Activated CD8-positive, alpha-beta T cell treated with anti-CD3 and anti-CD28 coated beads for 36 hours (primary cell): ENCODE measurements at regions of chr2 and their contacts with region 1.

Region 1: DNA sequence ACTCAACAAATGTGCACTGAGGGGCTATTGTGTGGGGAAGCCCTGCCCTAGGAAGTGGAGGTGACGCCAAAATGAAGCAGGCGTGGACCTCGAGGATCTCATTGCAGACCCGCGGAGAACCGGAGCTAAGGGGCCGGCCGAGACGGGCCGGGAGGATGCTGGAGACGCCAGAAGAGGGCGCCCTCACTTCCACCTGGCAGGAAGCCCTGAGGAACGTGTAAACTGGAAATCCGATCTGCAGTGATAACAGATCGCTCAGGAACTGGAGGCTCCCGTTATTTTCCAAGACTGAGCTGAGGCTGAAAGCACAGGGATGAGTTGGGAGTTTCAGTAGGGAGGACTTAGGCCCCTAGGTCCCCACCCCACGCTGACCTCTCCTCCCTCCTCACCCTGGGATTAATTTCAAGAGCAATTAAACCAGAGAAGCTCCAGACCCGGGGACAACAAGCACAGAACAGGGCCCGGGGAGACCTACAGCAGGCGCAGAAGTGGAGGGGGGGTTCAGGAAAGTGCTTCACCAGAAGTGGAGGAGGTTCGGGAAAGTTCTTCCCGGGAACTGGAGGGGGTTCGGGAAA is 7.7 kb upstream of the COL6A3 start:
- DNase-seq: peak; percentile 88
- ATAC-seq: peak; percentile 92
- H3K4me3 Mint-ChIP-seq: peak overlapping the region; percentile 43
- H3K27ac Mint-ChIP-seq: peak overlapping the region; percentile 71
- H3K4me1 Mint-ChIP-seq: peaks cover 23% of the 10 kb centered on the region
- H3K27me3 Mint-ChIP-seq: peaks cover 1% of the 10 kb centered on the region
- CTCF ChIP-seq: peak; percentile 78

Region 2: GRCh38 chr2:237085248-237086221 is 336.1 kb before region 1 on chr2 and contains the start of gene COPS8:
- CTCF ChIA-PET with region 1: interaction called, 12 read pairs
- POLR2A ChIA-PET with region 1: no interaction called
- intact Hi-C with region 1: no loop called
- DNase-seq: peak; percentile 94
- ATAC-seq: peak; percentile 99
- H3K4me3 Mint-ChIP-seq: peak within 1 kb of the TSS; percentile 96
- H3K27ac Mint-ChIP-seq: peak within 1 kb of the TSS; percentile 96
- H3K4me1 Mint-ChIP-seq: peaks cover 20% of the 10 kb centered on the region
- H3K27me3 Mint-ChIP-seq: no peaks in the 10 kb centered on the region
- CTCF ChIP-seq: no peak
- total RNA-seq, gene COPS8: 51.5 to 54.2 TPM

Region 3: DNA sequence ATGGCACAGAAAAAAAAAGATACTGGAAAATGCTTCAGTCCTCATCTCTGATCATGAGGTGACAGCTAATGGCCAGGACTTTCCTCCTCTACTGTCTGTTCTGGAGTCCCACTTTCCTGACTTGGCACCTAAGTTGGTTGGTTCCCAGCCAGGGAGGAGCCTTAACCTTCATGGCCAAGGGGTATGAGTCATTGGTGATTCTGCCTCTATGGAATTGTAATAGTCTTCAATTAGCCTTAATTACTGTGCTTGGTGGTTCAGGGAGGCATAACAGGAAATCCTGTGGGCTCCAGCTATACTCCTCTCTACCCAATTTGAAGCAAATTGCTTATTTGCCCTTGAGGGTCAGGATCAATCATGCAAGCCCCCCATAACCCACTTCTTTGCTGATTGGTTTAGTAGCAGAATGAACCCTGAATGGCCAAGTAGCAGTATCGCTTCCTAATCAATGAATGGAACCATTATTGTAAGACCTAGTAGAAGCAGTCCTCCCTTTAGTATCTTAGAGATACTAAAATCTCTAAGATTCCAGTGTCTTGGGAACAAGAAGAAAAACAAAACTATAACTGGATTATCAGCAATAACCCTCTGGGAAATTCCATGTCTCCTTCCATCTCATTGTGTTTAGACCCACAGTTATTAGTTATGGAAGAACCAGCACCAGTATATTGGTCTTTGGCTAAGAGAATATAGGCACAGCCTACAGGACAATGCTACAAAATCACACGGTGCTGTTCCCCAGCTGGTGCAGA is 116.7 kb before region 1 on chr2:
- CTCF ChIA-PET with region 1: no interaction called
- POLR2A ChIA-PET with region 1: no interaction called
- intact Hi-C with region 1: no loop called
- DNase-seq: no peak
- ATAC-seq: no peak
- H3K4me3 Mint-ChIP-seq: no peak overlapping the region
- H3K27ac Mint-ChIP-seq: no peak overlapping the region
- H3K4me1 Mint-ChIP-seq: no peaks in the 10 kb centered on the region
- H3K27me3 Mint-ChIP-seq: peaks cover 7% of the 10 kb centered on the region
- CTCF ChIP-seq: no peak

Region 4: GRCh38 chr2:237391140-237391723 is 30.4 kb before region 1 on chr2:
- CTCF ChIA-PET with region 1: interaction called, 10 read pairs
- POLR2A ChIA-PET with region 1: no interaction called
- intact Hi-C with region 1: no loop called
- DNase-seq: no peak
- ATAC-seq: no peak
- H3K4me3 Mint-ChIP-seq: no peak overlapping the region
- H3K27ac Mint-ChIP-seq: no peak overlapping the region
- H3K4me1 Mint-ChIP-seq: no peaks in the 10 kb centered on the region
- H3K27me3 Mint-ChIP-seq: no peaks in the 10 kb centered on the region
- CTCF ChIP-seq: no peak

Region 5: DNA sequence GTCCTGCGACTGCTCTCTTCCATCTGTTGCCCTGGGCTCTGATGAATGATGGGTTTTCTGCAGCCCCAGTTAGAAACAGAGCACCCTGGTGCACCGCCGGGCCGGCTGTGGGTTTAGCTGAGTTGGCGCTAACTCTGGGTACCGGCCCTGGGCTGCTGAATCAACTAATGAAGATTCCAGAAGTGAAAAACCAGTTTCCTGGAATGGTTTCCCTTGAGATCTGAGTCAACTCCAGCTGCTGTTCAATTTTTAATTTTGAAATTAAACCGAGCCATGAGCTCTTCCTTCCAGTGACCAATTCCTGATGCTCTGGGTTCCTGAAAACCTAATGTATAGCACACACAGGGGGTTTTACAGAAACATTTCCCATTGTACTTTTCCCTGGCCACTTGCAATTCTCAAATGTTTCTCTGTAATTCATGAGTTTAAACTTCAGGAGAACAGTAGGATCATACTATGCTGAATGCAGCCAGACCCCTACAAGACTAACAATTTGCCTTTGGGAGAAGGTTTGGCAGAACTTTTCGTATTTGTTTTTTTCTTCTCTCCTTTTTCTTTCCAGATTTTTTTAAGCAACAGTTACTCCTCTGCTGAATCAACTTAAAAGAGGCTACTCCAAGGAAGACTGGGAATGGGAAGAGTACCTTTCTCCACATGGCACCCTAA is 13.2 kb before region 1 on chr2:
- CTCF ChIA-PET with region 1: interaction called, 19 read pairs
- POLR2A ChIA-PET with region 1: interaction called, 3 read pairs
- intact Hi-C with region 1: no loop called
- DNase-seq: no peak
- ATAC-seq: no peak
- H3K4me3 Mint-ChIP-seq: no peak overlapping the region
- H3K27ac Mint-ChIP-seq: no peak overlapping the region
- H3K4me1 Mint-ChIP-seq: no peaks in the 10 kb centered on the region
- H3K27me3 Mint-ChIP-seq: no peaks in the 10 kb centered on the region
- CTCF ChIP-seq: no peak

Region 6: DNA sequence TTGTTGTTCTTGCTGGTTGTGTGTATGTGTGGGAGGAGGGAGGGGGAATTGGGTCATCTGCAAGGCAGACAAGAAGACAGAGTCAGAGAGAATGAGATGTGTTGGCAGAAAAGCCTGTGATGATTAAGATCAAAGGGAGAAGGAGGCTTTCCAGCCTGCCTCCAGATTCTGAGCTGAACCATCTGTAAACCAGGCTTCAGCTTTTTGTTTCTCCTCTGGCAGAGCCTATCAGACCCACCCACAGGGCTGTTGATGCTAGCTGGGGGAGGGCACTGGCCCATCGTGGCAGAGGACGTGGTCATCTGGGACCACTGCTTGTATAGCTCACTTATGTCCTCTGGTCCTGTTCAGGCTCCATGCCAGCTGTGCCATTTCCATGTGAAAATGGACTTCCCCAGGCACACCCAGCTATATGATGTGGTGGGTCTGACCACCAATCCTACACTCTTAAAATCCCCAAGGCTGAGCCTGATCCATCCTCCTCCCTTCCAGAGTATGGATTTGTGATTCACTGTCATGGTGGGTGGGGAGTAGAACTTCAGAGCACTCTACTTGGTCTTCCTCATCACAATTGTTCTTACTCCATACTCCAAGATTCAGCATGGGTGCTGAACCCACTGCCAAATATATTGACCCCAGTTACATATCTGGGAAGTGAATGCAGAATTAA is 20.1 kb after region 1 on chr2:
- CTCF ChIA-PET with region 1: interaction called, 59 read pairs
- POLR2A ChIA-PET with region 1: interaction called, 32 read pairs
- intact Hi-C with region 1: no loop called
- DNase-seq: peak; percentile 55
- ATAC-seq: peak; percentile 65
- H3K4me3 Mint-ChIP-seq: peak overlapping the region; percentile 24
- H3K27ac Mint-ChIP-seq: peak overlapping the region; percentile 78
- H3K4me1 Mint-ChIP-seq: peaks cover 55% of the 10 kb centered on the region
- H3K27me3 Mint-ChIP-seq: no peaks in the 10 kb centered on the region
- CTCF ChIP-seq: no peak

Region 7: DNA sequence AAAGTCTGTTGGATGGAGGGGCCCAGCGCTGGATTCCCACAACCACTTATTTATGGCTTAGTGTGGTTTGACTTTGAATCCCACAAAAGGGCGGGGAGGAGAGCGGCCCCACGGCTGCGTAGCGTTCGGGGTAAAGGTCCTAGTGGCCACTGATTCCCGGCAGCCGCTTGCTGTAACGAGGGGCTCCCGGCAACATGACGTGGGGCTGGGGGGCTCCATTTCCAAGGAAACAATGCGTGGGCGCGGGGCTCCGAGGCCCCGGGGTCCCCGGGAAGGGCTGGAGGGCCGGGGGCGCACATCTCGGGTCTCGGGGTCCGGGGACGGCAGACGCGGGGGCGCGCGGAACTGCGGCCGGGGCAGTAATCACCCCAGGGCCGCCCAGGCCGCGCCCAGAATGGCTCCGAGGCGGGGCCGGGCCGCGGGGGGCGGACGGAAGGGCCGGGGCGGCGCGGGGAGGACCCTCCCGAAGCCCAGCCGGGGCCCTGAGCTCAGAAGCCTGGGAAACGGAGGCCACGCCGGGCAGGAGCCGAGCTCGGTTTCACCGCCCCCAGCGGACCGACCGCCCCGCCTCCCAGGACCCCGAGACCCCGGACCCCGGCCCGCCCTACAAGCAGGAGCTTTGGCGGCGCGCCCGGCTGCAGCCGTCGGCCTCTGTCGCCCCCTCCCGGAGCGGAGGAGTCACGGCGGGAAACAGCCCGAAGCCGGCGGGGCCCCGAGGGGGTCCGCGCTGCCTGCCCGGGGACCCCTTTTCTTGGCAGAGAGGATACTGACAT is 53.5 kb after region 1 on chr2:
- CTCF ChIA-PET with region 1: interaction called, 257 read pairs
- POLR2A ChIA-PET with region 1: interaction called, 15 read pairs
- intact Hi-C with region 1: loop called (anchors 5 kb)
- DNase-seq: peak; percentile 75
- ATAC-seq: peak; percentile 85
- H3K4me3 Mint-ChIP-seq: peak overlapping the region; percentile 71
- H3K27ac Mint-ChIP-seq: peak overlapping the region; percentile 78
- H3K4me1 Mint-ChIP-seq: peaks cover 10% of the 10 kb centered on the region
- H3K27me3 Mint-ChIP-seq: peaks cover 20% of the 10 kb centered on the region
- CTCF ChIP-seq: peak; percentile 94

Region 8: DNA sequence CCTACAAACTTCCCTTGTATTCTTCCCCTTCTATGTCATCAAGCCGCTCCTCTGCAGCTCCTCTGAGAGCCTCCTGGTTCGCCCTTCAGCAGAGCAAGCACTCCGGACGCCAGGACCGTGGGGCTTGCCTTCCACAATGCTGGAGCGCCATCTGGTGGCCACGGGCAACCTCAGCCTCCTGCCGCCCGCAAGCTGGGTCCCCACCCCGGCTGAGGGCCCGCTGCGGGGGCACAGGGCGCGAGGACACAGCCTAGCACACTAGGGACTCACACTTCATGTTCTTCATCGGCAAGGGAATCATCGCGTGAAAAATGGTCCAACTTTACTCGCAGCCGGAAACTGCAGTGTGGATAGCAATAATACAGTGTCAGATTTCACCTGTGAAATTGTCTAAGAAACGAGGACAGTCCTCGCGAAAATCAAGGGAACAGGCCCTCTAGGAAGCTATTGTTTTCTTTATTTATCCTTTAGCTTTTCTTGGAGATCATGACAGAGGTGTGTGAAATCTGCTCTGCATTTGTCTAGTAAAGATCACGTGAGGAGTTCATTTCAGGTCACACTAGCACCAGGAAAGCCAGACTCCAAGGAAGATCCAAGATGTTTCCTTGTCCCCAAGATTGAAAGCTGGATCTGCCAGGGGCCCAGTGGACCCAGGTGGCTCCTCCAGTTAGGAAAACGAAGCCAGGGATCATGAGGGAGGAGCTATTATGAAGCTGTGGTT is 150.6 kb after region 1 on chr2:
- CTCF ChIA-PET with region 1: interaction called, 23 read pairs
- POLR2A ChIA-PET with region 1: no interaction called
- intact Hi-C with region 1: no loop called
- DNase-seq: peak; percentile 90
- ATAC-seq: peak; percentile 98
- H3K4me3 Mint-ChIP-seq: no peak overlapping the region
- H3K27ac Mint-ChIP-seq: no peak overlapping the region
- H3K4me1 Mint-ChIP-seq: peaks cover 6% of the 10 kb centered on the region
- H3K27me3 Mint-ChIP-seq: peaks cover 3% of the 10 kb centered on the region
- CTCF ChIP-seq: peak; percentile 98

Region 9: GRCh38 chr2:237616734-237617586 is 195.3 kb after region 1 on chr2:
- CTCF ChIA-PET with region 1: no interaction called
- POLR2A ChIA-PET with region 1: no interaction called
- intact Hi-C with region 1: no loop called
- DNase-seq: no peak
- ATAC-seq: peak; percentile 45
- H3K4me3 Mint-ChIP-seq: no peak overlapping the region
- H3K27ac Mint-ChIP-seq: no peak overlapping the region
- H3K4me1 Mint-ChIP-seq: peaks cover 38% of the 10 kb centered on the region
- H3K27me3 Mint-ChIP-seq: no peaks in the 10 kb centered on the region
- CTCF ChIP-seq: no peak